ENCODE measurements at regions of chr5 and their contacts with region 1.

Region 1: GRCh38 chr5:137320056-137321045 is 178.8 kb downstream of the SPOCK1 start:
- DNase-seq: peak; percentile 8
- H3K4me3 ChIP-seq: no peak overlapping the region
- H3K27ac ChIP-seq: no peak overlapping the region
- H3K27me3 ChIP-seq: peaks cover 4% of the 10 kb centered on the region
- CTCF ChIP-seq: peak; percentile 90

Region 2: DNA sequence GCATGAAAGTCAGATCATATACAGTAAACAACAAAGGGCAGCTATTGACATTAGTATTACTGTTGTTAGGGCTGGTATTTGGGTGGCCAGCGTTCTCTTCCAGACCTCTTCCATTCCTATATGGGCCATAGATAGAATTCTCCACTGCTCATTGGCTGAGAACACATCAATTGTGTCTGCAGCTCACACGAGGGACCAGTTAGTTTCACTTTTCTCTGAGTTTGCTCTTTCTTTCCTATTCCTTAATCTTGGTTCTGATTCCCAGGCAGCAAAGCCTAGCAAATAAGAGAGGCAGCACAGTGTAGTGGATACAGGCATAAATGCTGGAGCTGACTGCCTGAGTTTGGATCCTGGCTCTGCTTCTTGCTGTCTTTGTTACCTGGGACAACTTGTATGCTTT is 297.6 kb before region 1 on chr5:
- CTCF ChIA-PET with region 1: no interaction called
- POLR2A ChIA-PET with region 1: no interaction called
- DNase-seq: no peak
- H3K4me3 ChIP-seq: no peak overlapping the region
- H3K27ac ChIP-seq: no peak overlapping the region
- H3K27me3 ChIP-seq: no peaks in the 10 kb centered on the region
- CTCF ChIP-seq: no peak

Region 3: DNA sequence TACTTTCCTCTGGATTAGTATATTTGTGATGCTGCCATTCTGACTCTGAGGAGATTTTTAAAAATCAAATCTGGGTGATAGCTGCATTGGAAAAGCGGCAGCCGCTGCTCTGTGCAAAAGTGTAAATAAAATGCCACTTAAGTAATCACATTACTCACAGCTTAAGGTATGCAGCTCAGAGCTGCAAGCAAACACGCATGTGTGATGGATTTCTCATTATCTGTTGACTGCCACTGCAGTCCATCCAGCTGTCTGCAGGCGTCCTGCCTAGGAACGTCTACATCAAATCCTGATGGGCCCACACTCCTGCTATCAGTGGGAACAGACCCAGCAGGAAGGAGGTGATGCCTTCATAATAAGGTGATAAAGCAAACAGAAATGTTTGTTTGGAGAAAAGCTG is 38.1 kb before region 1 on chr5:
- CTCF ChIA-PET with region 1: interaction called, 19 read pairs
- POLR2A ChIA-PET with region 1: no interaction called
- DNase-seq: no peak
- H3K4me3 ChIP-seq: no peak overlapping the region
- H3K27ac ChIP-seq: peak overlapping the region; percentile 21
- H3K27me3 ChIP-seq: peaks cover 3% of the 10 kb centered on the region
- CTCF ChIP-seq: no peak

Region 4: GRCh38 chr5:137336565-137337120 is 16.3 kb after region 1 on chr5:
- CTCF ChIA-PET with region 1: interaction called, 20 read pairs
- POLR2A ChIA-PET with region 1: no interaction called
- DNase-seq: no peak
- H3K4me3 ChIP-seq: no peak overlapping the region
- H3K27ac ChIP-seq: no peak overlapping the region
- H3K27me3 ChIP-seq: peaks cover 2% of the 10 kb centered on the region
- CTCF ChIP-seq: no peak

Region 5: DNA sequence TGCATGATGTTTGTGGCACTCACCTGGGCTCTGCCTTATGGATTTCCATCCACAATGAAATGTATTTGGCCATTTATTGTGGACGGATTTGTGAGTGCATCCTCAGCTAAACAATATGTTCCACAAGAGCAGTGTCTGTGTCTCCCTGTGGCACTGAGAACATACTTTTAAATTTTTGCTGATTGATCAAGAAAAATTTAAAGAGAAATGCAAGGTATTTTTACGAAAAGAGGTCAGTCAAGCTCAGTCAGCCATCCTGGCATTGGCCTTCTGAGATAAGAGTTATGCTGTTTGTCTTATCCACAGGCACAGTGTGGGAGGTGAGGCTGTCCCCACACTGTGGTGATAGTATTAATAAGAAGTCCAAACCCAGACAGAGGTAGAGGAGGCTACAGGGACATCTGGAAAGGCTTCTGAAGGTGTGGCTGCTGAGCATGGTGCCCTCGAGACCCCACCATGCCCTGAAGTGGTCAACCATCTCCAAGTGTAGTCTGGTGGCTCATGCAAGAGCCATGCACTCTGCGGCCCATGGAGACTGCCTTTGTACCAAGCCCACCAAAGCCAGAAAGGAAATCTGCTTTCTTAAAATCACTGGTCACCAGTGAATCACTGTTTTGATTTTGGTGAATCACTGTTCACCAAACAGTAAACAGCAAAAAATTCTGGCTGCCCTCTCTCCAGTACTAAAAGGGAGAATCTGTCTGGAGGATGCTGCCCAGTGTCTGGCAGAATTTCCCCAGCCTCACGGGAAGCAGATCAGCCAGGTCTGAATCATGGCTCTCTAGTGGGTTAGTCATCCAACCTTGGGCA is 150.0 kb after region 1 on chr5:
- CTCF ChIA-PET with region 1: interaction called, 10 read pairs
- POLR2A ChIA-PET with region 1: no interaction called
- DNase-seq: peak; percentile 73
- H3K4me3 ChIP-seq: no peak overlapping the region
- H3K27ac ChIP-seq: peak overlapping the region; percentile 54
- H3K27me3 ChIP-seq: no peaks in the 10 kb centered on the region
- CTCF ChIP-seq: no peak

Region 6: GRCh38 chr5:137498736-137499505 is 178.6 kb after region 1 on chr5 and contains the start of gene SPOCK1:
- CTCF ChIA-PET with region 1: interaction called, 127 read pairs
- POLR2A ChIA-PET with region 1: interaction called, 3 read pairs
- DNase-seq: no peak
- H3K4me3 ChIP-seq: peak within 1 kb of the TSS; percentile 62
- H3K27ac ChIP-seq: no peak within 1 kb of the TSS
- H3K27me3 ChIP-seq: peaks cover 11% of the 10 kb centered on the region
- CTCF ChIP-seq: peak; percentile 57
- polyA plus RNA-seq, gene SPOCK1: 74.6 and 76.0 TPM in 2 replicates

Region 7: GRCh38 chr5:138102454-138103318 is 782.3 kb after region 1 on chr5:
- CTCF ChIA-PET with region 1: interaction called, 10 read pairs
- POLR2A ChIA-PET with region 1: no interaction called
- DNase-seq: no peak
- H3K4me3 ChIP-seq: no peak overlapping the region
- H3K27ac ChIP-seq: no peak overlapping the region
- H3K27me3 ChIP-seq: peaks cover 4% of the 10 kb centered on the region
- CTCF ChIP-seq: no peak

Measured in AG04450 (cell line).